CD4-positive, alpha-beta T cell (primary cell): ENCODE measurements at regions of chr16 and their contacts with region 1.

Region 1: GRCh38 chr16:69761983-69762813 is at the start of gene WWP2:
- DNase-seq: peak; percentile 55 to 93 (median 74)
- ATAC-seq: peak; percentile 72
- H3K4me3 ChIP-seq: peak within 1 kb of the TSS; percentile 98
- H3K4me3 Mint-ChIP-seq: peak within 1 kb of the TSS; percentile 93
- H3K27ac ChIP-seq: peak within 1 kb of the TSS; percentile 89 to 92
- H3K27ac Mint-ChIP-seq: peak within 1 kb of the TSS; percentile 98
- H3K4me1 ChIP-seq: peaks cover 20% of the 10 kb centered on the region
- H3K4me1 Mint-ChIP-seq: peaks cover 34% of the 10 kb centered on the region
- H3K27me3 ChIP-seq: no peaks in the 10 kb centered on the region
- H3K27me3 Mint-ChIP-seq: no peaks in the 10 kb centered on the region
- CTCF ChIP-seq: no peak
- total RNA-seq, gene WWP2: 41.9 to 43.0 TPM

Region 2: DNA sequence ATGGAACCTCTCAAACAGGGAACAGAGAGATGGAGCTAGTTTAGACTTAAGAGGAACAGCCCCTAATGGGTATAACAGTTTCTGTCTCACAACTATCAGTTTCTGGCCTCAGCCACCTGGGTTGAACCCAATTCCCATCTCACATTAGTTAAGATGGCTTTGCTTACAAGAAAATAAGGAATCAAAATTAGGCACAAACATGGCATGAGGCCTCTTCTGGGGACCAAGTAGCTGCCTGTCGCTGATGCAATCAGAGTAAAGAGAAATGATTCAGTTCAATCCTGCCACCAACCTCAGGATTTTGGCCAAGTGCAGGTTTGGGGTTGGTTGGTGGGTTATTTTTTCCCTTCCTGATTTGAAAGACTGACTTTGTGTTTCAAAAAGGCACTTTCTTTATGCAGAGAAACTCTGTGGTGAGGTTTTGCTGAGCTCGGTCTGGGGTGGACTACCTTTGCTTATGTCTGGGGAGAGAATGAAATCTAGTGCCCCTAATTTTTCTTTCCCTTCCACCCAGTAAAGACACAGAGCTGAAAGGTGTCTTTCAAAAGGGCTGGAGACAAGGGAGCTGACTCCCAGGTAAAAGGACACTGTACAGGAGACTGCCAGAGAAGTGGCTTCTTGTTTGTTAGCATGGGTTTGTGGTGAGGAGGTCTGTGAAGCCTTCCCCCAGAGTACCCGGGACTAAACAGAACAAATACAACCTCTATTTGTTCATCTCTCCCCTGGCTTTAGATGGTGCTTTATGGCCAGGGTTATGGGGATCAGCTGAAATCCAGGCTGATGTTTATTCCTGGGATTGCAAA is 241.2 kb before region 1 on chr16:
- CTCF ChIA-PET with region 1: no interaction called
- POLR2A ChIA-PET with region 1: no interaction called
- intact Hi-C with region 1: no loop called
- DNase-seq: no peak
- ATAC-seq: no peak
- H3K4me3 ChIP-seq: no peak overlapping the region
- H3K4me3 Mint-ChIP-seq: no peak overlapping the region
- H3K27ac ChIP-seq: no peak overlapping the region
- H3K27ac Mint-ChIP-seq: no peak overlapping the region
- H3K4me1 ChIP-seq: no peaks in the 10 kb centered on the region
- H3K4me1 Mint-ChIP-seq: no peaks in the 10 kb centered on the region
- H3K27me3 ChIP-seq: no peaks in the 10 kb centered on the region
- H3K27me3 Mint-ChIP-seq: no peaks in the 10 kb centered on the region
- CTCF ChIP-seq: no peak

Region 3: GRCh38 chr16:69565671-69566239 is 196.4 kb before region 1 on chr16 and contains the start of gene NFAT5:
- CTCF ChIA-PET with region 1: no interaction called
- POLR2A ChIA-PET with region 1: no interaction called
- intact Hi-C with region 1: loop called (anchors 2 to 5 kb)
- DNase-seq: peak; percentile 71 to 95 (median 88)
- ATAC-seq: peak; percentile 80
- H3K4me3 ChIP-seq: peak within 1 kb of the TSS; percentile 84
- H3K4me3 Mint-ChIP-seq: peak within 1 kb of the TSS; percentile 100
- H3K27ac ChIP-seq: peak within 1 kb of the TSS; percentile 75 to 93
- H3K27ac Mint-ChIP-seq: peak within 1 kb of the TSS; percentile 96
- H3K4me1 ChIP-seq: peaks cover 31% of the 10 kb centered on the region
- H3K4me1 Mint-ChIP-seq: peaks cover 47% of the 10 kb centered on the region
- H3K27me3 ChIP-seq: no peaks in the 10 kb centered on the region
- H3K27me3 Mint-ChIP-seq: no peaks in the 10 kb centered on the region
- CTCF ChIP-seq: no peak
- total RNA-seq, gene NFAT5: 19.5 to 21.2 TPM

Region 4: DNA sequence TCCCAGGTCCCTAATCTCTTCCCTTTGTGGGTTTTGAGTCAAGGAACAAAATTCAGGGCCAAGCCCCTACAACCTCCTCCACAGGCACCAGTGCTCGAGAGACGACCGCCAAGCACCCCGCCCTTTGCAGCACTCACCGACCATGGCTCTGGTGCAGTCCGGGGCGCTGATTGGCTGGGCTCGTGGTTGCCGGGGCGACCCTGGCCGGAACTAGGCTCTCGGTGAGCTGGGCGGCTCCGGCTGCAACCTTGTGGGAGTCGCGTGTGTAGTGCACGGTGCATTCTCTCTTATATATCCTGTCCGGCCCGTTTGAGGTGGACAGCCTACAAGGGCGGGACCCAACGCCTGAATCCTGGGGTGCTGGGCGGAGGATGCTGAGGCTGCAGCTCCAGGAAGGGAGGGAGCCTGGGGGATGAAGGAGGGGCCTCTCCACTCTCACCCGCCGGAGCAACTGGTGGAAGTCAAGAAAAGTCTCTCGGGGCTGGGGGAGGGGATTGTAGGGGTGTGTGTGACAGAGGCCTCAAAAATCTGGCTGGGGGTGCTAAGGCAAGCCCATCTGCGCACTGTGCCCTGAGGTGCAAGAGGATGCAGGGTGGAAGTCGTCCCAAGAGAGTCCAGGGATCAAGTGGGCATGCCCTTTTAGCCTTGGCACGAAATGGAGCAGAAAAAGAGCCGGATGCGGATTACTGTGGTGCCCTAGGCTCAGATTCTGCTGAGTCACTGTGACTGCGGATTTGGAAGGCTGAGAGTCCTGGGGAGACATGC is 35.7 kb before region 1 on chr16 and contains the start of gene NQO1:
- CTCF ChIA-PET with region 1: no interaction called
- POLR2A ChIA-PET with region 1: interaction called, 14 read pairs
- intact Hi-C with region 1: no loop called
- DNase-seq: peak; percentile 70 to 91 (median 83)
- ATAC-seq: peak; percentile 94
- H3K4me3 ChIP-seq: peak within 1 kb of the TSS; percentile 67
- H3K4me3 Mint-ChIP-seq: peak within 1 kb of the TSS; percentile 94
- H3K27ac ChIP-seq: peak within 1 kb of the TSS; percentile 23 to 50
- H3K27ac Mint-ChIP-seq: peak within 1 kb of the TSS; percentile 84
- H3K4me1 ChIP-seq: peaks cover 25% of the 10 kb centered on the region
- H3K4me1 Mint-ChIP-seq: peaks cover 22% of the 10 kb centered on the region
- H3K27me3 ChIP-seq: no peaks in the 10 kb centered on the region
- H3K27me3 Mint-ChIP-seq: no peaks in the 10 kb centered on the region
- CTCF ChIP-seq: no peak
- total RNA-seq, gene NQO1: 0.25 to 0.80 TPM

Region 5: GRCh38 chr16:69773260-69773947 is 11.2 kb after region 1 on chr16:
- CTCF ChIA-PET with region 1: interaction called, 4 read pairs
- POLR2A ChIA-PET with region 1: interaction called, 16 read pairs
- intact Hi-C with region 1: no loop called
- DNase-seq: no peak
- ATAC-seq: no peak
- H3K4me3 ChIP-seq: no peak overlapping the region
- H3K4me3 Mint-ChIP-seq: no peak overlapping the region
- H3K27ac ChIP-seq: no peak overlapping the region
- H3K27ac Mint-ChIP-seq: peak overlapping the region; percentile 9
- H3K4me1 ChIP-seq: peaks cover 21% of the 10 kb centered on the region
- H3K4me1 Mint-ChIP-seq: peaks cover 47% of the 10 kb centered on the region
- H3K27me3 ChIP-seq: no peaks in the 10 kb centered on the region
- H3K27me3 Mint-ChIP-seq: no peaks in the 10 kb centered on the region
- CTCF ChIP-seq: no peak